Ascending aorta (tissue), 2 donors: ENCODE measurements at regions of chr20 and their contacts with region 1.

Region 1: GRCh38 chr20:18767676-18768075 is 45.9 kb upstream of the SCP2D1 start:
- DNase-seq: no peak
- H3K4me3 ChIP-seq: no peak overlapping the region
- H3K27ac ChIP-seq: no peak overlapping the region
- H3K4me1 ChIP-seq: no peaks in the 10 kb centered on the region
- H3K27me3 ChIP-seq: no peaks in the 10 kb centered on the region
- CTCF ChIP-seq: no peak

Region 2: DNA sequence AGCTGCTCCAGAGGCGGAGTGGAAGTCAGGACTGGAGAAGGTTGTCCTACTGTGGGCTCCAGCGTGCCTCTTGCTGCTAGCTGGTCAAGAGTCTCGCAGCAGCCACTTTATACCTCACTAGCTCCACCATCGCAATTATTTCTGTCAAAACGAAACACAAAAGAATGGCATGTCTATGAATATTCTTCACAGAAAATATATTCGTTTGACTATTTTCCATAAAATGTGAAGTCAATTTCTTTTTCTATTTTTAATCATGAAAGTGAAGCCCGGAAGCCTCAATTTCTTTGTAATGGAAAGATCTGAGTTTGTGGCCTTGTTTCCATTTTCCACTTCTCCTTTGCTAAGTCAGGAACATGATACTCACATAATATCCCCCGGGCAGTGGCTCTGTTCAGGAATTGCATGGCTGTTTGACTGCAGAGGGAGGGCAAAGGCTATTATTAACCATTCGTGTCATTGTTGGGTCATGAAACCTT is 128.1 kb before region 1 on chr20:
- intact Hi-C with region 1: no loop called
- DNase-seq: no peak
- H3K4me3 ChIP-seq: peak overlapping the region in 1 of 2 donors; percentile 16
- H3K27ac ChIP-seq: peak overlapping the region; percentile 50 to 73
- H3K4me1 ChIP-seq: peaks cover 3% of the 10 kb centered on the region in 2 donors
- H3K27me3 ChIP-seq: no peaks in the 10 kb centered on the region
- CTCF ChIP-seq: no peak

Region 3: DNA sequence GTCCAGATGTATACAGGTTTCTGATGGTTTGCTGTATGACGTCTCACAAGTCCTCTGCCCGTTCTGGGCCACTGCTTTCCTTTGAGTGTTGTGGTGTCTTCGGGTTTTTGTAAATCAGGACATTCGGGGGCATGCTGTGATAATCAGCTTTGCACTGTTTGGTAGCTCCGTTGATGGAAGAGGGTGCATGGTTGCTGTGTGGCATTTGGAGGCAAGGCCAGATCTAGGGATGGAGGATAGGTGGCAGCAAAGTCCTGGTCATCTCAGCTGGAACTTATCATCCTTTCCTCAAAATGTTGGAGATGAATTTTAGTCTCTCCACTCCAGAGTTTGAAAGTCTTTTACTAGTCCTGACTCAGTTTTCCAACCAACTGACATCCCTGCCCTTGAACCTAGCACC is 136.9 kb after region 1 on chr20:
- intact Hi-C with region 1: loop called (anchors 10 kb)
- DNase-seq: no peak
- H3K4me3 ChIP-seq: no peak overlapping the region
- H3K27ac ChIP-seq: no peak overlapping the region
- H3K4me1 ChIP-seq: no peaks in the 10 kb centered on the region
- H3K27me3 ChIP-seq: no peaks in the 10 kb centered on the region
- CTCF ChIP-seq: peak in 2 of 3 experiments; percentile 21 to 35